Transverse colon (tissue), 4 donors: ENCODE measurements at regions of chr10 and their contacts with region 1.

Region 1: DNA sequence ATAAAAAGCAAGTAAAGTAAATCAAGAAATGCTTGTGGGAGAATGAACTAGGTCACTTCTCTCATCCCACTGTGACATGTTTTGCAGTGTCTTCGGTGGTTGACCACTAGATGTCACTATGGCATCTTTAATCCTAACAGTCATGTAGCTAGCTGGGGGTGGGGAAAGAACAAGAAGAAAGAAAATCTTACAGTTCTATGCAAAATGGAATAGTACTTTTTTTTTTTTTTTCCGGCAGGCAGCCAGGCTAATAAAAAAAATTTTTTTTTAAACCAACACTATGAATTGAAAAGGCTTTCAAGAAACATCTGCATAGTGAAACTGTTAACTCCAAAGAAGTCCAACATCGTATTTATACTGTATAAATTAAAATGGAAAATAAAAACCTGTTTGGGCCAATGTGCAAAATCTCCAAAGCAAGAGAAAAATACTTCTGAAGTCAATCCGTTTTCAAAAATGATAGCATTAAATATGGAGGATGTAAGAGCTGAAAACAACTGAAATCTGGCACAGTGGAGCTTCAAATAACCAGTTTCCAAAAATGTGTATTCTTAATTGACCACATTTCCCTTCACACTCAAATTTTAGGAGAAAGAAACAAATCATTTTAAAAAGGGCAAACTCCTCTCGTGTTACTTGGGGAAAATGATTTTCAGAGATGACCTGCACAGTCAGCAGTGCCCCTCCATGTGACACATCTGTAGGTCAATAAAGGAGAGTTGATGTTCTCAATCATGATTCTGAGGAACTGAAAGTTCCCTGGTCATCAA is 38.5 kb downstream of the CDK1 start:
- DNase-seq: peak; percentile 34
- H3K4me3 ChIP-seq: peak overlapping the region in 1 of 4 donors; percentile 10
- H3K27ac ChIP-seq: peak overlapping the region; percentile 40 to 69 (median 56)
- H3K4me1 ChIP-seq: peaks cover 0 to 20% (median 2%) of the 10 kb centered on the region in 4 donors
- H3K27me3 ChIP-seq: no peaks in the 10 kb centered on the region
- CTCF ChIP-seq: peak; percentile 73 to 85 (median 77)
- EP300 ChIP-seq: no peak
- POLR2A ChIP-seq: no peak

Region 2: GRCh38 chr10:60606343-60607080 is 210.3 kb before region 1 on chr10:
- in situ Hi-C with region 1: no loop called
- intact Hi-C with region 1: no loop called
- DNase-seq: no peak
- H3K4me3 ChIP-seq: no peak overlapping the region
- H3K27ac ChIP-seq: no peak overlapping the region
- H3K4me1 ChIP-seq: no peaks in the 10 kb centered on the region
- H3K27me3 ChIP-seq: no peaks in the 10 kb centered on the region
- CTCF ChIP-seq: no peak
- EP300 ChIP-seq: no peak
- POLR2A ChIP-seq: no peak

Region 3: DNA sequence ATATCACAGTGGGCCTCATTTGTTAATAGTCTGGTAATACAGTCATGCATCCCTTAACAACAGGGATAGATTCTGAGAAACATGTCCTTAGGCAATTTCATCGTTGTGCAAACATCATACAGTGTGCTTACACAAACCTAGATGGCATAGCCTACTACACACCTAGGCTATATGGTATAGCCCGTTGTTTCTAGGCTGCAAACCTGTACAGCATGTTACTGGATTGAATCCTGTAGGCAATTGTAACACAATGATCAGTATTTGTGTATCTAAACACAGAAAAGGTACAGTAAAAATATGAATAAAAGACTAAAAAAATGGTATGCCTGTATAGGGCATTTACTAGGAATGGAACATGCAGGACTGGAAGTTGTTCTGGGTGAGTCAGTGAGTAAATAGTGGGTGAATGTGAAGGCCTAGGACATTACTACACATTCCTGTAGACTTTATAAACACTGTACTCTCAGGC is 139.2 kb after region 1 on chr10:
- in situ Hi-C with region 1: loop called (anchors 5 to 10 kb)
- intact Hi-C with region 1: no loop called
- DNase-seq: no peak
- H3K4me3 ChIP-seq: no peak overlapping the region
- H3K27ac ChIP-seq: peak overlapping the region in 1 of 4 donors; percentile 29
- H3K4me1 ChIP-seq: peaks cover 5 to 33% (median 7%) of the 10 kb centered on the region in 4 donors
- H3K27me3 ChIP-seq: no peaks in the 10 kb centered on the region
- CTCF ChIP-seq: no peak
- EP300 ChIP-seq: no peak
- POLR2A ChIP-seq: no peak

Region 4: DNA sequence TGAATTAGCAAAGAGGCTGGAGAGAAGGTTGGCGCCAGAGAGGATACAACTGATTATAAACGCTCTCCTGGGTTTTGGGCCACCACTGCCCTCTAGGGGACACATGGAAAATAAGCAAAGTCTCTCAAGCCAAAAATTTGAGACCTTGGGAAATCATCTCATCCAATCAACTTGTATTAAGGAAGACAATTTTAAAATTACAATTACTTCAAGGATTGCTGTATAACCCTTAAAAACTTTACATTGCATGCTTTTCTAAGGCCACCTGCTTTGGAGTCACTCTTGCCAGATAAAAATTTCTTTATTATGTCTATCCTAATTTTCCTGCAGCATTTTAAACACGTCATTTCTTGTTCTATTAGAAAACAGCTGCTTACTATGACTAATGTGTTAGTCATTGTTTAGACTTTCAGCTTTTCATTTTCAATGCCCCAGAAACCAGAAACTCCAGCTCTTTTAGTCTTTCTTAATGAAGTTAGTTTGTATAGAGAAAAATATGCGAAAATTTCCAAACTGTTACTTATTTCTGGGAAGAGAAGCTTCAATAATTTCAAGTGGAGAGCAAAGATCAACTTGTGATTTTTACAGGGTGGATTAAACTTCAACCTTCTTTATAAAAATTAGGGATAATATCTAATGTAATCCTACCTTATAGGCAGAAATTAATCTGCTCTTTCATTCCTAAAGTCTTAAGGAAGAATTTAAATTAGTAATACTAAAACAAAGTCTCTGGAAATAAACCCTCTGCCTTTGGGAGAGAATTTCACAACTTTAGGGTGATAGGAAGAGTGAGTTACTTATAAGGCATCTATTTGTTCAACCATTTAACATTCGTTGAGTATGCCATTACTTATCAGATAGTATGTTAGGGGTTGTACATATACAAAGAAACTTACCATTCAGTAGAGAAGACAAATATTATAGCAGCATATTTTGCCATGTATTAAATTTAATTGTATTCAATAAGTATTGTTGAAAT is 147.7 kb after region 1 on chr10:
- in situ Hi-C with region 1: loop called (anchors 5 to 10 kb)
- intact Hi-C with region 1: loop called (anchors 2 kb)
- DNase-seq: peak; percentile 71
- H3K4me3 ChIP-seq: no peak overlapping the region
- H3K27ac ChIP-seq: peak overlapping the region; percentile 31 to 64 (median 46)
- H3K4me1 ChIP-seq: peaks cover 0 to 14% (median 0%) of the 10 kb centered on the region in 4 donors
- H3K27me3 ChIP-seq: no peaks in the 10 kb centered on the region
- CTCF ChIP-seq: peak; percentile 78 to 86 (median 80)
- EP300 ChIP-seq: no peak
- POLR2A ChIP-seq: no peak

Region 5: GRCh38 chr10:61284222-61284890 is 467.5 kb after region 1 on chr10:
- in situ Hi-C with region 1: loop called in 3 of 4 experiments (anchors 10 to 25 kb)
- intact Hi-C with region 1: loop called (anchors 10 kb)
- DNase-seq: no peak
- H3K4me3 ChIP-seq: no peak overlapping the region
- H3K27ac ChIP-seq: peak overlapping the region in 1 of 4 donors; percentile 56
- H3K4me1 ChIP-seq: peaks cover 0 to 5% (median 0%) of the 10 kb centered on the region in 4 donors
- H3K27me3 ChIP-seq: no peaks in the 10 kb centered on the region
- CTCF ChIP-seq: peak; percentile 67 to 74 (median 73)
- EP300 ChIP-seq: no peak
- POLR2A ChIP-seq: no peak

Region 6: DNA sequence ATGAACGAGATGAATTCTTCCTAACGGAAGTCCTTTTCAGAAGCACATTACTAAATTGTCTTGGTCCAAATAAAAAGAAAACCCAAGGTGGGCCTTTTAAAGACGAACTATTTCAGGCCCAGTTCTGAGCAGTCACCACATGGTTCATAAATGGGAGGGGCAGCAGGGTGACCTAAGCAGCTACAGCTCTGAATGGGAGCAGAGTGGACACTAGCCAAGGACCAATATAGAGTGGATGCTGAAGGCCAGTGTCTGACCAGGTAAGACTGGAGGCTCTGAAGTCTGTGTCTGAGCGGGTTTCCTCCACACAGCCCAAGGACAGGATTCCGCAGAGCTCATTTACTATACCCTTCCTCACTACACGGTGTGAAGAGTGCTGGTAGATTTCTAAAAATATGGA is 477.3 kb after region 1 on chr10:
- in situ Hi-C with region 1: loop called (anchors 10 to 25 kb)
- intact Hi-C with region 1: loop called (anchors 10 kb)
- DNase-seq: no peak
- H3K4me3 ChIP-seq: no peak overlapping the region
- H3K27ac ChIP-seq: peak overlapping the region in 2 of 4 donors; percentile 11 to 18
- H3K4me1 ChIP-seq: peaks cover 0 to 12% (median 0%) of the 10 kb centered on the region in 4 donors
- H3K27me3 ChIP-seq: no peaks in the 10 kb centered on the region
- CTCF ChIP-seq: no peak
- EP300 ChIP-seq: no peak
- POLR2A ChIP-seq: no peak

Region 7: DNA sequence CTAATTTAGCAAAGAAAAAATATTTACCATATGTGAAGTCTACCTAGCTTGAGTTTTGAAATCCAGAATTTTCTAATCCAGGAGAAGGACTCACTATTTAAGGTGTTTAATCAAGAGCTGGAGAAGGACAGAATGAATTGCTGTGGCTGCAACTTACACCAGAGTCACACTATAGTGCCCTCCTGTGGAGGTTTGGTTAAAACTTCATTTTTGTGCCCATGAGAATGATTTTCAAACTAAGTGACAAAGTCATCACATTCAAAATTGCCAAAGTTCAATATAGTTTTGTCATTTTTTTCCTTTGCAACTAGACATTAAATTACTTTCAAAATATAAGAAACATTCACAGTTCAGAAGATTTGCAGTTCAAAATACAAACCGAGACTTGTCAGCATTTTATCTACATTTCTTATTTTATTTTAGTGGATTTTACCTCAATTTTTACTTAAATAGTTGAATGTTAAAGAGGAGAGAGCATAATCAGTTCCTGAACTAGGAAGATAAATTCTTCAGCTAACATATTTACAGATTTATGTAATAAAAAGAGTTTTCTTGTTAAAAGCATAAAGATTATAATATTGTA is 916.6 kb after region 1 on chr10:
- in situ Hi-C with region 1: loop called in 1 of 4 experiments (anchors 25 kb)
- intact Hi-C with region 1: no loop called
- DNase-seq: no peak
- H3K4me3 ChIP-seq: no peak overlapping the region
- H3K27ac ChIP-seq: no peak overlapping the region
- H3K4me1 ChIP-seq: peaks cover 0 to 3% (median 0%) of the 10 kb centered on the region in 4 donors
- H3K27me3 ChIP-seq: no peaks in the 10 kb centered on the region
- CTCF ChIP-seq: peak; percentile 43 to 54 (median 47)
- EP300 ChIP-seq: no peak
- POLR2A ChIP-seq: no peak